ENCODE measurements at regions of chr2 and their contacts with region 1.

Region 1: DNA sequence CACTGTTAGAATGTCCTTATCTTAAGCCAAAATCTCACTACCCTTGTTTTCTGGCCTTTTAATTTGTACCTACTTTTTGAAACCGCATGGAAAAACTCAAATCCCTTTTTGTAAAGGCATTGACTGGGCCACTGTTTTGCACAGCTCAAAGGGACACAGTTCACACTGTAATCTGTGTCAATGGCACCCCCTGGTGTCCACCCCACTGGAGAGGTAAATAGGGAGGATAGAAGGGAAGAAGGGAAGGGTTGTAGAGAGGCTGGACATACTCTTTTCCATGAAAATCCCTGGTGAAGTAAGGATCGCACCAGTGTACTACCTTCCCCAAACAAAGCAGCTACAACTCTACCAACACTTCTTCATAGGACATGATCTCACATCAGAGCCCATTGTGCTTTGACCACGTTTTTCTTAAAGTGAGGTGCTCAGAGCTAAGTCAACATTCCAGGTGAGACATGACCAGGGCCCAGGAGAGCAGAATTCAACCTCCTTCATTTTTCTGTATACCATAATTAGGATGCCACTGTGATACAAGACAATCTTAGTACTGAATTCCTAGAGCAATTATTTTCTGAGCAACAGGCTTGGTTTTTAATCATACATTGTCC is 92.4 kb upstream of the RMDN2 start:
- DNase-seq: peak; percentile 87
- H3K4me3 Mint-ChIP-seq: no peak overlapping the region
- H3K27ac Mint-ChIP-seq: no peak overlapping the region
- H3K4me1 Mint-ChIP-seq: peaks cover 16% of the 10 kb centered on the region
- H3K27me3 Mint-ChIP-seq: peaks cover 7% of the 10 kb centered on the region

Region 2: DNA sequence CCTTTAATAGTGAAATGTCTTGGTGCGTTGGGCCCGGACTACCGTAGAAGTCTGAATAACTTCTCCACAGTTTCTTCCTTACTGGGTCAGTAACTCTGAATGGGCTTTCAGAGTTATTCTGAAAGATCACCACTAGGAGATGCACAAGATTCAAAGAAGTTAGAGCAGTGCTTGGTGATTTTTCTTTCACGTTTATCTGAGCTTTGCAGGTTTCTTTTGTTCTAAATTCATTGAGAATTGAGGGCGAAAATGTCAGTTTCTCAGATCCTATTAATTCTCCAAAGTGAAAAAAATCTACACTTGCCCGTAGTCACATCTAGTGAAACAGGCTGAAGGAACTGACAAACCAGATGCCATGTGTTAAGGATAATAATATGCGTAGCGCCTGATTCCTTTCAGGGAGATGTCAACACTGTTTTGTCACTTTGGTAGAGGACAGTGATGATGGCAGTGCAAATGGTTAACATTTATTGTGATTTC is 418.2 kb before region 1 on chr2:
- CTCF ChIA-PET with region 1: interaction called, 95 read pairs
- DNase-seq: no peak
- H3K4me3 Mint-ChIP-seq: no peak overlapping the region
- H3K27ac Mint-ChIP-seq: no peak overlapping the region
- H3K4me1 Mint-ChIP-seq: no peaks in the 10 kb centered on the region
- H3K27me3 Mint-ChIP-seq: peaks cover 39% of the 10 kb centered on the region

Region 3: DNA sequence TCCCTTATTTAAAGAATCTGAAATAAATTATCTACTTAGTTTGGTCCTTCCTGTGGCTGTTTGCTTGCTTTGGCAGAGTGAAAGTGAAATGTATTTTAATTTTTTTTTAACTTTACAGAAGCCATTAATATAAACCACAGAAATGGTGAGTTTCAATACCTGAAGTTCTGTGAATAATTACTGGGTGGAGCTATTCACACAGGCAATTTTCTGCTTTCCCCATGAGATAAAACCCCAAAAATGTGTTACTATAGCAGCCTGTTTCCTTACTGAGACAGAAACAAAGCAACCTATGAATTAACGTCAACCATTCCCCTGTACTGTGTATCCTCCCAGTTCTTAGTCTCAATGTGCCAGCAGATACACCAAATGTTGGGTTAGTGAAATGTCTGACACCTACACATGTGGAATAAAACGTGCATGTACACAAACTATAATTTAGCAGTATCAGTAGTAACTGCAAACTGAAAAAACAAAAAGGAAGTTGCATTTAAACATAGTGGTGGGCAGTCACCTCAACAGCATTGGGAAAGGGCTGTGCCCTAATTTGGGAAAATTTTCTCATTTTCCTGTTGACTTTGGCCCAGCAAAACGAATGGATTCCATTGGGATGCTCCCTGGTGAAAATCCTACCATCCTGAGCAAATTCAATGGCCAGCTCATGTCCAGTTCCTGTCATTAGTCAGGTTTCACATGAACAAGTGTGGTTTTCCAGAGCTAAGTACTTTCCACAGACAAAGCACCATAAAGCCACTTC is 19.3 kb after region 1 on chr2:
- CTCF ChIA-PET with region 1: interaction called, 14 read pairs
- DNase-seq: no peak
- H3K4me3 Mint-ChIP-seq: no peak overlapping the region
- H3K27ac Mint-ChIP-seq: peak overlapping the region; percentile 64
- H3K4me1 Mint-ChIP-seq: peaks cover 35% of the 10 kb centered on the region
- H3K27me3 Mint-ChIP-seq: peaks cover 19% of the 10 kb centered on the region

Region 4: GRCh38 chr2:37912056-37912455 is 79.4 kb after region 1 on chr2:
- CTCF ChIA-PET with region 1: no interaction called
- DNase-seq: no peak
- H3K4me3 Mint-ChIP-seq: no peak overlapping the region
- H3K27ac Mint-ChIP-seq: no peak overlapping the region
- H3K4me1 Mint-ChIP-seq: no peaks in the 10 kb centered on the region
- H3K27me3 Mint-ChIP-seq: peaks cover 20% of the 10 kb centered on the region

Measured in activated naive CD4-positive, alpha-beta T cell treated with anti-CD3 and anti-CD28 coated beads, Interleukin-2, amount 10 ng/mL, durations not matched to agents 7 days and 5 days (primary cell).